ENCODE measurements at regions of chr2 and their contacts with region 1.

Region 1: GRCh38 chr2:70565039-70565731 is 11.6 kb upstream of the TGFA start:
- DNase-seq: no peak
- H3K4me3 ChIP-seq: no peak overlapping the region
- H3K27ac ChIP-seq: no peak overlapping the region
- H3K4me1 ChIP-seq: no peaks in the 10 kb centered on the region
- H3K27me3 ChIP-seq: no peaks in the 10 kb centered on the region
- CTCF ChIP-seq: no peak
- EP300 ChIP-seq: no peak
- POLR2A ChIP-seq: no peak

Region 2: GRCh38 chr2:68918497-68918896 is 1646.7 kb before region 1 on chr2:
- in situ Hi-C with region 1: no loop called
- intact Hi-C with region 1: loop called (anchors 5 kb)
- DNase-seq: no peak
- H3K4me3 ChIP-seq: no peak overlapping the region
- H3K27ac ChIP-seq: no peak overlapping the region
- H3K4me1 ChIP-seq: no peaks in the 10 kb centered on the region
- H3K27me3 ChIP-seq: no peaks in the 10 kb centered on the region
- CTCF ChIP-seq: no peak
- EP300 ChIP-seq: no peak
- POLR2A ChIP-seq: no peak

Region 3: GRCh38 chr2:70440621-70441020 is 124.6 kb before region 1 on chr2:
- in situ Hi-C with region 1: no loop called
- intact Hi-C with region 1: no loop called
- DNase-seq: no peak
- H3K4me3 ChIP-seq: no peak overlapping the region
- H3K27ac ChIP-seq: no peak overlapping the region
- H3K4me1 ChIP-seq: no peaks in the 10 kb centered on the region
- H3K27me3 ChIP-seq: no peaks in the 10 kb centered on the region
- CTCF ChIP-seq: no peak
- EP300 ChIP-seq: no peak
- POLR2A ChIP-seq: no peak

Measured in transverse colon (tissue), 4 donors.